ENCODE measurements at regions of chr6 and their contacts with region 1.

Region 1: DNA sequence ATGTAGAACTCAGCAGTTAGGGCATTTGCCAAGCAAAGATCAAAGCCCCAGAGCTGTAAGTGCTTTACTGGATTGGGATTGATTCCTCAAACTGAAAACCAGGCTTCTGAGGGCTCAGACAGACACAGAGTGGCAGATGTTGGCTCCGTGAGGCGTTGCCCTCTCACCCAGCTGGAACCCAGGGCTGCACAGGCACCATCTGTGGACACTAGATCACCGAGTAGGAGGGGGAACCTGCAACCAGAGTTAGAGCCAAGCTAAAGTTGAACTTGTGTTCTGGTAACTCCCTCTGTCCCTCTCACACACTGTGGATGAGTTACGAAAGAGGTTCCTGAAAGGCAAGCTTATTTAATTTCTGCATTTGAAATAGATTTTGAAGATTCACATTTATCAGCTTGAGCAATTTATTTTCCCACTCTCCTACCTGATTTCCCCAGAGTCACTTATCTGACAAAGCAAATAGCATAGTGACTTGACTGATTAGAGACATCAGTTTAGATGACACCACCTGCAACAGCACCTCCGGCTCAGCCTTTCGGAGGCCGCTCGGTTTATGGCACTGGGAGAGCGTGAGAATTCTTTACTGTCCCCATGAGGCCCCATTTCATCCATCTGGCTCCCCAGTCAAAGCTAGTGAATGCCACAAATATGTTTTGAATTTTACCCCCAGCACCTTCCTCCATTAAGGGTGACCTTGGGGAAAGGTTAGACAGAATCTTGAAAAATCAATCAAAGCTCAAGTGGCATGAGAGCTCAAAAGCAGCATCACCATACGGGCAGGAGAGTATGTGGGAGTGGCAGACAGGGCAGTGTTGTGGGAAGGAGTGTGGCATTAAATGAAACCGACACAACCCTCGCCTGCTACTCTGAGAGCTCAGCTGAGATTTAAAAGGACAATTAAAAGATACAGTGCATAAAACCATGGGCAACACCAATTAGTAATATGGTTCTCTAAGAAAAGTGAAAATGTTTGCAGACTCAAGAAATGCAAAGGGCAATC is 48.5 kb downstream of the RPF2 start:
- DNase-seq: peak; percentile 43 to 77 (median 68)
- ATAC-seq: peak; percentile 92 to 94 (median 93)
- H3K4me3 ChIP-seq: no peak overlapping the region
- H3K27ac ChIP-seq: peak overlapping the region in 11 of 12 donors; percentile 34 to 83 (median 58)
- H3K4me1 ChIP-seq: peaks cover 0 to 23% (median 0%) of the 10 kb centered on the region in 12 donors
- H3K27me3 ChIP-seq: no peaks in the 10 kb centered on the region
- CTCF ChIP-seq: no peak
- POLR2A ChIP-seq: no peak

Region 2: GRCh38 chr6:111087106-111087835 is 57.0 kb after region 1 on chr6 and contains the start of gene SLC16A10:
- intact Hi-C with region 1: loop called in 1 of 10 experiments (anchors 2 kb)
- DNase-seq: peak; percentile 76 to 87 (median 78)
- ATAC-seq: peak; percentile 83 to 97 (median 96)
- H3K4me3 ChIP-seq: peak within 1 kb of the TSS; percentile 47 to 76 (median 62)
- H3K27ac ChIP-seq: peak within 1 kb of the TSS in 9 of 12 donors; percentile 15 to 75 (median 52)
- H3K4me1 ChIP-seq: peaks cover 0 to 18% (median 9%) of the 10 kb centered on the region in 12 donors
- H3K27me3 ChIP-seq: peaks cover 0 to 39% (median 10%) of the 10 kb centered on the region in 9 donors
- CTCF ChIP-seq: no peak
- POLR2A ChIP-seq: peak; percentile 68 to 95
- total RNA-seq, gene SLC16A10: 5.1 to 16.7 (median 7.4) TPM